ENCODE measurements at regions of chr2 and their contacts with region 1.

Region 1: GRCh38 chr2:55014962-55015939 is 35.0 kb downstream of the RTN4 start:
- DNase-seq: no peak
- ATAC-seq: peak; percentile 69 to 79 (median 72)
- H3K4me3 ChIP-seq: no peak overlapping the region
- H3K27ac ChIP-seq: peak overlapping the region; percentile 95
- H3K4me1 ChIP-seq: peaks cover 38% of the 10 kb centered on the region
- H3K27me3 ChIP-seq: no peaks in the 10 kb centered on the region
- CTCF ChIP-seq: peak; percentile 71

Region 2: DNA sequence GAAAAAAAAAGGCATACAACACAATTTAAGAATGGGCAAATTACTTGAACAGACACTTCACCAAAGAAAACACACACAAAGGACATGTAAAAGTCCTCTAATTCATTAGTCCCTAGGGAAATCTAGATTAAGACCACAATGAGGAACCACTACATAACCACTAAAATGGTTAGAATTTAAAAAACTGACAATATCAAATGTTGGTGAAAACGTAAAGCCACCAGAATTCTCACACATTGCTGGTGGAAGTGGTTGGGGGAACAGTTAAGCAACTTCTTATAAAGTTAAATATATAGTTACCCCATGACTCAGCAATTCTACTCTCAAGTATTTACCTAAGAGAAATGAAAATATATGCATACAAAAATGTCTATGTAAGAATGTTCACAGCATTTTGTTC is 23.2 kb after region 1 on chr2:
- intact Hi-C with region 1: no loop called
- DNase-seq: no peak
- ATAC-seq: no peak
- H3K4me3 ChIP-seq: no peak overlapping the region
- H3K27ac ChIP-seq: no peak overlapping the region
- H3K4me1 ChIP-seq: no peaks in the 10 kb centered on the region
- H3K27me3 ChIP-seq: no peaks in the 10 kb centered on the region
- CTCF ChIP-seq: no peak

Region 3: GRCh38 chr2:55175254-55176025 is 160.2 kb after region 1 on chr2:
- intact Hi-C with region 1: loop called (anchors 2 kb)
- DNase-seq: no peak
- ATAC-seq: peak; percentile 80 to 96 (median 86)
- H3K4me3 ChIP-seq: no peak overlapping the region
- H3K27ac ChIP-seq: no peak overlapping the region
- H3K4me1 ChIP-seq: peaks cover 6% of the 10 kb centered on the region
- H3K27me3 ChIP-seq: no peaks in the 10 kb centered on the region
- CTCF ChIP-seq: peak; percentile 68

Measured in psoas muscle (tissue), 8 donors.